Ascending aorta (tissue), 2 donors: ENCODE measurements at regions of chr11 and their contacts with region 1.

Region 1: DNA sequence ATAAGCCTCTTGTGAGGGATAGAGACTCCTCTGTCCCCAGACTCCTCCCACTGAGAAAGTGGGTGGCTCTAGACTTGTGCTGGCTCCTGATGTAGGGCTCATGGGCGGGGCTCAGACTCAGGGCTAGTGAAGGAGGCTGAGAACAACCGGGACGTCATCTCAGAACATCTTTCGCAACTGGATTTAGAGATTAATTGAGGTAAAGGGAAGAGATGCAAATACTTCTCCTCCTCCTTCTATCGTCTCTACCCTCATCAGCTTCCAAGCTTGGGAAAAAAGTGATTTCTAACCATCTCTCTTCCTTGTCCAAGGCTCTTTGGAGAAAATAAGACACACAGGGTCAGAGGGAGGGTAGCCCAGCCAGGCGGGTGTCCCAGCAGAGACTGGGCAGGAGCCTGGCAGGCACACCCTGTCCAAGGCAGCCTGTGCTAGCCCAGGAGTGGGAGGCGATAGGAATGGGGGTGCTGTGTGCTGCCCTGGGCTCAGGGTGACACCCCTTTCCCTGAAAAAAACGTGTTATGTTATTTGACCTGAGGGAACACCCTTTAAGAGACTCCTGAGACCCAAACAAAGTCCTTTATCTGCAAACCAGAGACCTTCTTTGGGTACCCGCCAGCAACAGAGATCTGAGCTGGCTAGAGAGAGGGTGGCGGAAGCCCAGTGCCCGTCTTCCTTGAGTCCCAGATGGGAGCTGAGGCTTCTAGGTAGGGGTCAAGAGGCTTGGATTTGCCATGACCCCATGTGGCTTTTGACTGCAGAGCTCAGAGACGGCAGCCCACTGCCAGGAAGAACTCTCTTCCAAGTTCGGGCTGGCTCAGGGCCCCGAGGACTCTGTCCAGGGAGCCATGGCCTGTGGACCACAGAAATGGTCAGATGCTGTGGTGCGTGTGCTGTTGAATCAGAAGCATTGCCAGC is 160.9 kb downstream of the ADAMTS15 start:
- DNase-seq: peak; percentile 70 to 95
- H3K4me3 ChIP-seq: no peak overlapping the region
- H3K27ac ChIP-seq: peak overlapping the region; percentile 88 to 91
- H3K4me1 ChIP-seq: peaks cover 10 to 47% of the 10 kb centered on the region in 2 donors
- H3K27me3 ChIP-seq: no peaks in the 10 kb centered on the region
- CTCF ChIP-seq: no peak

Region 2: GRCh38 chr11:130069684-130070108 is 539.7 kb before region 1 on chr11 and contains the start of gene APLP2:
- intact Hi-C with region 1: loop called (anchors 5 kb)
- DNase-seq: peak; percentile 99 to 100
- H3K4me3 ChIP-seq: peak within 1 kb of the TSS; percentile 87 to 96
- H3K27ac ChIP-seq: peak within 1 kb of the TSS; percentile 92 to 98
- H3K4me1 ChIP-seq: peaks cover 11 to 12% of the 10 kb centered on the region in 2 donors
- H3K27me3 ChIP-seq: no peaks in the 10 kb centered on the region
- CTCF ChIP-seq: peak in 1 of 3 experiments; percentile 3
- total RNA-seq, gene APLP2: 216 TPM

Region 3: GRCh38 chr11:130390071-130390758 is 219.2 kb before region 1 on chr11:
- intact Hi-C with region 1: no loop called
- DNase-seq: no peak
- H3K4me3 ChIP-seq: no peak overlapping the region
- H3K27ac ChIP-seq: no peak overlapping the region
- H3K4me1 ChIP-seq: peaks cover 6 to 8% of the 10 kb centered on the region in 2 donors
- H3K27me3 ChIP-seq: no peaks in the 10 kb centered on the region
- CTCF ChIP-seq: peak; percentile 33 to 67 (median 52)

Region 4: DNA sequence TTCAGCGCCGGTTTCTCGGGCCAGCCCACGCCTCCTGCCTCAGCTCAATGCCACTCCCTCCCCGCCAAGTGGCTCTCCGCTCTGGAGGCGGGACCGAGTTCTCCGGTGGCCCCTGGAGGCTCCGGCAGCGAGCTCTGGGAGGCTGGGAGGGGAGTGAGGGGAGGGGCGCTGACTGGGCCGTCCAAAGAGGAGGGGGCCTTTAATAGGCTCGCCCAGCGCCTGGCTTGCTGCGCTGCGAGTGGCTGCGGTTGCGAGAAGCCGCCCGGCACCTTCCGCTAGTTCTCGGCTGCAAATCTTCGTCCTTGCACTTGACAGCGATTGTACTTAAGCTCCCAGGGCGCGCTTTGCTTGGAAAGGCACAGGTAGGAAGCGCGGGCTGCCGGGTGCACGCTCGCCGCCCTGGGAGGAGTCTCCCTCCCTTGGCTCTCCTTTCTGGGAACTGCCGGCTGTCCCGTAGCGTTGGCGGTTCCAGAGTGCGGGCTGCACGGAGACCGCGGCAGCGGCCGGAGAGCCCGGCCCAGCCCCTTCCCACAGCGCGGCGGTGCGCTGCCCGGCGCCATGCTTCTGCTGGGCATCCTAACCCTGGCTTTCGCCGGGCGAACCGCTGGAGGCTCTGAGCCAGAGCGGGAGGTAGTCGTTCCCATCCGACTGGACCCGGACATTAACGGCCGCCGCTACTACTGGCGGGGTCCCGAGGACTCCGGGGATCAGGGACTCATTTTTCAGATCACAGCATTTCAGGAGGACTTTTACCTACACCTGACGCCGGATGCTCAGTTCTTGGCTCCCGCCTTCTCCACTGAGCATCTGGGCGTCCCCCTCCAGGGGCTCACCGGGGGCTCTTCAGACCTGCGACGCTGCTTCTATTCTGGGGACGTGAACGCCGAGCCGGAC is 160.7 kb before region 1 on chr11 and contains the start of gene ADAMTS15:
- intact Hi-C with region 1: loop called (anchors 2 kb)
- DNase-seq: peak; percentile 39 to 88
- H3K4me3 ChIP-seq: peak within 1 kb of the TSS; percentile 57 to 81
- H3K27ac ChIP-seq: peak within 1 kb of the TSS; percentile 76 to 82
- H3K4me1 ChIP-seq: peaks cover 11 to 24% of the 10 kb centered on the region in 2 donors
- H3K27me3 ChIP-seq: no peaks in the 10 kb centered on the region
- CTCF ChIP-seq: no peak
- total RNA-seq, gene ADAMTS15: 20.4 TPM

Region 5: GRCh38 chr11:130522284-130522961 is 87.0 kb before region 1 on chr11:
- intact Hi-C with region 1: loop called (anchors 5 kb)
- DNase-seq: peak; percentile 81 to 97
- H3K4me3 ChIP-seq: no peak overlapping the region
- H3K27ac ChIP-seq: peak overlapping the region; percentile 76 to 85
- H3K4me1 ChIP-seq: peaks cover 0 to 23% of the 10 kb centered on the region in 2 donors
- H3K27me3 ChIP-seq: no peaks in the 10 kb centered on the region
- CTCF ChIP-seq: no peak

Region 6: DNA sequence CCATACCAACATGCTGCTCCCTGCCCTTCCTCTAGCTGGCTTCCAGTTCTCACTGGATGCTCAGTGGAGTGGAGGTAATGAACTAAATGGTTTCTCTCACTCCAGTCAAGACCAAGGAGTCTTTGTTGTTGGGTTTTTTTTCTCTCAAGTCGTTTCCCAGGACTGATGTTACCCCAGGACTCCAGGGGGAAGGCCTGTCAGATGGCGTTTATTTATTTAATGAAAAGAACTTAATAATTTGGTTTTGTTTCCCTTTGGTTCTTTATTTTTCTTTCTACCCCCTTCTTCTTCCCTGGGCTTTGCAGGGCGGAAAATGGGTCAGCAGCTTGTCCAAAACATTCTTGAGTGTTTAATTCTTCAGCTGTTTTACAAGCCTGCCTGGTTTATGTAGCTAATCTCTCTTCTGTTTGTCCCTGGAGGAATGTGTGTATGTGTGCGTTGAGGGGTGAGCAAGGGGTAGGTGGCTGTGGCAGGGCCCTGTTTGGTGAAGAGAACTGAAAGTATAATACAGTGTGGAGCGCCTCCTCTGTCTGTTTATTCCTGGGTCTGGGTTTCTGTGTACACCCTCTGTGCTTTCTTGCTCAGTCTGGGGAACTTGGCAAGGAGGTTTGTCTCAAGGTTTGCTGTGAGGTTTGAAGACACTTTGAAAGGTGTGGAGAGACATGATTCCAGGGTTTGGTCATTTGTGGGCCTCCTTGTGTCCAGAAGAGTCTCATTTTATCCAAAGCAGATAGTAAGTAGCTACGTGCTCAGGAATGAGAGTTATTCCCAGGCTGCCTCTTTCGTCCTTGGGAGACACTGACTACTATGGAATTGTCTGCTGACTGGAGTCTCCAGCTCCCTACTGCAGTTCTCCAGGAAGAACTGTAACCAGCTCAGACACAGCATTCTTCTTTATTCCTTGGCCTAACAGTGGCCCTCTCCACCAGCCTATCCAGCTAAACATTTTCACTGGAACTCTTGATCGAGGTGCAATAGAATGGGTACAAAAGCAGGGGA is 14.6 kb after region 1 on chr11:
- intact Hi-C with region 1: no loop called
- DNase-seq: no peak
- H3K4me3 ChIP-seq: no peak overlapping the region
- H3K27ac ChIP-seq: peak overlapping the region; percentile 3 to 37
- H3K4me1 ChIP-seq: peaks cover 0 to 7% of the 10 kb centered on the region in 2 donors
- H3K27me3 ChIP-seq: no peaks in the 10 kb centered on the region
- CTCF ChIP-seq: peak in 1 of 3 experiments; percentile 14

Region 7: GRCh38 chr11:130653838-130654636 is 44.7 kb after region 1 on chr11:
- intact Hi-C with region 1: loop called (anchors 1 kb)
- DNase-seq: peak in 1 of 2 donors; percentile 89
- H3K4me3 ChIP-seq: no peak overlapping the region
- H3K27ac ChIP-seq: peak overlapping the region; percentile 74 to 80
- H3K4me1 ChIP-seq: peaks cover 14 to 37% of the 10 kb centered on the region in 2 donors
- H3K27me3 ChIP-seq: no peaks in the 10 kb centered on the region
- CTCF ChIP-seq: no peak

Region 8: DNA sequence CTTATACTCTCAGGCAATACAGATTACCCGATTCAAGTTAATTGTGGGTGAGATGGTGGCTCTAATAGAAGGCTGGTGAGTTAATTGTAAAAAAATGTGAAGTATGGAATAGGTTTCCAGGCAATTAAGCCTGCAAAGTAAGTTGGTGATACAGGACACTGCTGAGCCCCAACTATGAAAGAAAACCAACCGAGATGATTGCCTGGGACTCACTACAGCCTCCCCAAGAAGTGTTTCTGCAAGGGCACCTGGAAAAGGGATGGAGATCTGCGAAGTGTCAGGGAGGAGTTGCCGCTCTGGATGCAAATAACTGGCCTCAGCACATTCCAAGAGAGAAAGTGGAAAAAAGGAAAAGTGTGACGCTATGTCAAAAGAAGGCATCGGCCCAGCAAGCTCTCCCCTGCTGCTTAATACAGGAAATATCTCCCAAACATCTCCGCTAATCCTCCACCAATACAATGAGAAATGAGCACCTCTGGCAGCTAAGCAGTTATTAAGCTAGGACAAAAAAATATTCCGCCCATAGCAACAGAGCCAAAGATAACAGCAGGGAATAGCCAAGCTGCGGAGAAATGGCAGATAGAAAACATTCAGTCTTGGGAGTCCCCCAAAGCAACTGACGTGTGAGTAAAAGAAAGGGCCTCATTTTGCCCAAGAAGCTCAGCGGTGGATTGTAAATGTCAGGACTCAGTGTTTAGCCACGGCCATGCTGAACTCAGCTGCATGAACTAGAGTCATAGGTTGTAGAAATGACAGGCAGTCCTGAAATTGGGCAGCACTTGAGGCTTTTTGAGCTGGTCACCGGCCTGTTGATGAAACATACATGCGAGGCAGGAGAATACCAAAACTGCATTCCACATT is 173.2 kb after region 1 on chr11:
- intact Hi-C with region 1: loop called (anchors 5 kb)
- DNase-seq: peak in 1 of 2 donors; percentile 69
- H3K4me3 ChIP-seq: peak overlapping the region; percentile 11 to 40
- H3K27ac ChIP-seq: peak overlapping the region; percentile 75 to 78
- H3K4me1 ChIP-seq: peaks cover 3 to 27% of the 10 kb centered on the region in 2 donors
- H3K27me3 ChIP-seq: no peaks in the 10 kb centered on the region
- CTCF ChIP-seq: no peak

Region 9: DNA sequence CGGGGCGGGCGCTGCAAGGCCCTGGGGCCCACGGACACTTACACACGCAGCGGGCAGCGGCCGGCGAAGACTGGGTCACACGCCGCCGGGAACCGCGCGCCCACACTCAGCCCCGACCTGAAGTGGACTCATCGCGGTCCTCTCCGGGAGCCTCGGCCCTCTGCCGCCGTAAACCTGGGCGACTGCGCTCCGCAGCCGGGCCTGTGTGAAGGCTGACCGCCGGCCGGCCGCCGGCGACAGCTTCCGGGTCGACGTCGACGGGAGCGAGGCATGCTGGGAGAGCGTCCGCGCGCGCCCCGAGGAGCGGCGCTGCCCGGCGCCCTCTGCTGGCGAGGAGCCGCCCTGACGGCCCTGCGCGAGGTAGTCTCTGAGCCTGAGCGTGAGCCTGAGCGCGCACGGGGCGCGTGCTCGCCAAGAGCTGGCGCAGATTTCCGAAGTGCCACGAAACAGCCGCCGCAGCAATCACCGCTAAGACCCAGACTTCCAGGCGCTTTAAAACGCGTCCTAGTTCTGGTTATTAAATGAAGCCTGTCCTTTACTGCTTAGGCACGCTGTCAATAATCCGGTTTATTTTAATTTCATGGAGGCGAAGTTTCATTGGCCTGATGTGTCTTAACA is 307.0 kb after region 1 on chr11 and contains the start of gene SNX19:
- intact Hi-C with region 1: no loop called
- DNase-seq: peak; percentile 52 to 94
- H3K4me3 ChIP-seq: peak within 1 kb of the TSS; percentile 72 to 99
- H3K27ac ChIP-seq: peak within 1 kb of the TSS; percentile 86 to 97
- H3K4me1 ChIP-seq: peaks cover 6 to 11% of the 10 kb centered on the region in 2 donors
- H3K27me3 ChIP-seq: no peaks in the 10 kb centered on the region
- CTCF ChIP-seq: peak; percentile 88 to 96 (median 93)
- total RNA-seq, gene SNX19: 137 TPM

Region 10: DNA sequence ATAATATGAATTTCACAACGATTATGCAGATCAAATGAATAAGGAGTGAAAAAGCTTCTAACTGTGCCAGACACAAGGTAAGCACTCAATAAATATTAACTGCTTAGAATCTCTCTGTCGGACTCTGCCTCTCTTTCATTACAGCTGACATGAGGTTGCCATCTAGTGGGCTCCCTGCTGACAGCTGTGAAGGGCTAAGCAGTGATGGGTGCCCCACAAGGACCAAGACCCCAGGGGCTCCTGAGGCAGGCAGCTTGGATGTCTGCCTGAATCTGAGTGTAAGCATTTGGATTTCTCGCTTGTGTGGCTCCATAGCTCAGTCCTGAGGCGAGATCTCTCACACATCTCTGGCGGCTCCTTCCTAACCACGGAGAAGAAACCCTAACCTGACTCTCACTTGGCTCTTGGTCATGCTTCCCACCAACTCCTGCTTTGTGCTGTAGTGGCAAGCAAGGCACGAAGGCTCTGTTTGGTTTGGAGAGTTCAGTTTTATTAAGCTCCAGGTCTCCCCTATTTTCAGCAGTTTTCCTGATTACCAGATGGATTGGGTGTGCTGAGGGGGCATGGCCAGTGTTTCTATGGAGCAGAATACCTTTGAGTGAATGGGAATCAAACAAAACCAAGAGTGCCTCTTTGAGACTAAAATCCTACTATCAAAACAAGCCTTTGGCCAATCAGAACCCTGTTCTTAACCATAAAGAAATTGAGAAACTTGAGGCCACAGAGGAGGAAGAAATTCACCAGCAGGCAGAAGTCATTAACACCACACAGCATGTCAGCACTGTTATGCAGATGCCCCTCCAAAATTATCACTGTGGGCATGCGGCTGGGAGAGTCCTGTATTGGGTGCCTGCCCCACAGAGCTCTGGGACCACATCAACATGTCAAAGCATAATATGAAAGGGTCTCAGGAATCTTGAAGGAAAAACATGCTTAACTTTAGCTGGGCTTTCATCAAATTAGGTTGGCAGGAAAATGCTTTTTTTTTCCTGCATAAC is 608.2 kb after region 1 on chr11:
- intact Hi-C with region 1: no loop called
- DNase-seq: no peak
- H3K4me3 ChIP-seq: no peak overlapping the region
- H3K27ac ChIP-seq: no peak overlapping the region
- H3K4me1 ChIP-seq: no peaks in the 10 kb centered on the region
- H3K27me3 ChIP-seq: no peaks in the 10 kb centered on the region
- CTCF ChIP-seq: peak in 1 of 3 experiments; percentile 8